Head of caudate nucleus (tissue), 42 donors: ENCODE measurements at regions of chr1 and their contacts with region 1.

Region 1: DNA sequence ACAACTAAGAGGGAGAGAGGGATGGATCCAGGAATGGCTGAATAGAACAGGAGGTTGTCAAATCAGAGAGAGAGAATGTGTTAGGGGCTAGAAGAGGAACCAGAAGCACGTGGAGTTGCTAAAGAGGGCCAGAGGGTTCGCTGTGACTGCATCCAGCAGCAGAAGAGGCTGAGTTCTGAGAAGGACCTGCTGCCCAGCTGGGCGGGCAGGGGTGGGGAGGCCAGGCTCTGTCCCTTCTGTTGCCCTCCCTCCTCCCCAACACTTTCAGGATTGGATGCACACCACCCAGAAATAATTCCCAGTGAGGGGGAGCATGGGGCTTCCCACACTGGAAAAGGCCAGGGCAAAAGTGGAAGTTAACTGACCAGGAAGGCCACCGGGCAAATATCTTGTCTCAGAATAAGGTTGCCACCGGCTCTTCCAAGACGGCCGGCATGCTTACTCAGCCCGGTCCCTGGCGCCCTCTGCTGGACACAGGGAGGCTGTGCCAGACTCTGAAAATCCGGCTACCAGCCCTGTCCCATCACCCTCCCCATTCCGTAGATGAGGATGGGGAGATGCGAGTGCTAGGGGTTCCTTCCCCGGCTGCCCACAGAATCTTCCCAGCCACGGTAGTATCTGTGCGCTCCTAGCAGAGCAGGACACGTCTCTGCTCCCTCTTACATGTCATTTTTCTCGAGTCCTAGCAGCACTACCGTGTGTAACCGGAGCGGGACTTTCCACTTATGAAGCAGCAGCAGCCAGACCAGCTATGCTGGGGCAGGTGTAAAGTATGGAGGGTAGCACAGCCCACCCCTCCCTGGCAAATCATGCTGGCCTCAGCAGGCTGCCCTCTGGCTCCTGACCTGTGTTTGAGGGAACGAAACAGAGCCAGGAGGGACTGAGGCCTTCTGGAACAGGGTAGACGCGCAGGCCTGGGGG is 46.8 kb upstream of the A3GALT2 start:
- DNase-seq: peak; percentile 86 to 97 (median 93)

Region 2: GRCh38 chr1:33127001-33127791 is 240.5 kb before region 1 on chr1:
- intact Hi-C with region 1: loop called (anchors 10 kb)
- DNase-seq: peak; percentile 94 to 99 (median 98)

Region 3: DNA sequence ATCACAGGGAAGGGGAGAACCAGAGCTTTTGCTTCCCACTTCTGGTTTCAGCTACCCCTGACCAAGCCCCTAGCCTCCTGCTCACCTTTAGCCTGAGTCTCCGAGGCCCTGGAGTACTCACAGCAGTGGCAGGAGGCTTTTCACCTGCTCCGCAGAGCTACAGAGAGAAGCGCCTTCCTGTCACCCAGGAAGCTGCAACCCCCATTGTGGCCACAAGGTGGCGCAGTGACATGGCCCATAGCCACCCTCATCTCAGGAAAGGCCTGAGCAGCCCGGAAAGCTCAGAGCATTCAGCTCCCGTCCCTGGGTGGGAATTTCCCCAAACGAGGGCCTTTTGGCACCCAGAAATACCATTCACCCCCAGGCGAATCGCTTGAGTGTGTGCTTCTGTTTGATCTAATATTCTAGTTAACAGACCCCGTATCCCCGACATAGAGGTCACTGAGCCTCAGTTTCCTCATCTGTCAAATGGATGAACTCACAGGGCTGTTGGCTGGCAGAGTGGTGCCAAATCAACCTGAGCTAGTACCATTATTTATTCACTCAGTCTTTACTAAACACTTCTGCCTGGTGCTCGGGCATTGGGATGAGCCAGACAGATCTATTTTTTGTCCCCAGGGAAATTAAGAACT is 72.2 kb before region 1 on chr1:
- intact Hi-C with region 1: loop called (anchors 2 kb)
- DNase-seq: peak; percentile 59 to 98 (median 93)

Region 4: DNA sequence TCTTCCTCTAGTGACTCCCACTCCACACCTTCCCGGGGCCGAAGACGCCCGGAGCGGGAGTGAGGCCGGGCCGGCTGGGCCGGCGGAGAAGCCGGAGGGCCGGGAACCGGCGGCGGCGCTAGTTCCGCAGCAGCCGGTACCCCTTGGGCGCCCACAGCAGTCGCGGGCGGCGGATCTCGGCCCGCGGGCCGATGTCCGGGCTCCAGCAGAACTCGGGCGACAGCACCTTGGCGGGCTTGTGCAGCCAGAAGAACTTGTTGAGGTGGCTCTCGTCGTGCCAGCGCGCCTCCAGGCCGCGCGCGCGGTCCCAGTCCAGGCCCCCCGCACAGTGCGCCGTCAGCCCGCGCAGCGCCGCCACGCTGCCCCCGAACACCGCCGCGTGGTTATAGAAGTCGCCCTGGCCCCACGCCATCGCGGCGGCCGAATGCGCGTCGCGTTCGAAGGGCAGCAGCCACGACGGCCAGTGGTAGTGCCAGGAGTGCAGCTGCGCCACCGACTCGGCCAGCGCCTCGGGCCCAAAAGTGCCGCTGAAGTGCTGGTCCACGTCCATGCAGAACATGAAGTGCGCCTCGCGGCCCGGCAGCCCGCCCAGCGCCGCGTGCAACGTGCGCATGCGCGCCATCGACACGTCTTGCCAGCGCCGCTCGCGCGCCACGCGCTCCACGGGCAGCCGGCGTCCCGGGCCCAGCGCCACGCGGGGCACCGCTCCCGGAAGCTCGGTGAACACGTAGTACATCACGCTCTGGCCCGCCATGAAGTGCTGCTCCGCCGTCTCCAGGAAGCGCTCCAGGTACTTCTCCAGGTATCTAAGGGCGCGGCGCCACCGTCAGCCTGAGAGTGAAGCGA is 60.9 kb before region 1 on chr1:
- intact Hi-C with region 1: no loop called
- DNase-seq: peak in 1 of 42 donors; percentile 54